ENCODE measurements at regions of chr11 and their contacts with region 1.

Region 1: GRCh38 chr11:122743949-122744348 is 88.4 kb downstream of the UBASH3B start:
- DNase-seq: peak; percentile 91
- H3K4me3 Mint-ChIP-seq: no peak overlapping the region
- H3K27ac Mint-ChIP-seq: no peak overlapping the region
- H3K4me1 Mint-ChIP-seq: peaks cover 5% of the 10 kb centered on the region
- H3K27me3 Mint-ChIP-seq: peaks cover 6% of the 10 kb centered on the region

Region 2: DNA sequence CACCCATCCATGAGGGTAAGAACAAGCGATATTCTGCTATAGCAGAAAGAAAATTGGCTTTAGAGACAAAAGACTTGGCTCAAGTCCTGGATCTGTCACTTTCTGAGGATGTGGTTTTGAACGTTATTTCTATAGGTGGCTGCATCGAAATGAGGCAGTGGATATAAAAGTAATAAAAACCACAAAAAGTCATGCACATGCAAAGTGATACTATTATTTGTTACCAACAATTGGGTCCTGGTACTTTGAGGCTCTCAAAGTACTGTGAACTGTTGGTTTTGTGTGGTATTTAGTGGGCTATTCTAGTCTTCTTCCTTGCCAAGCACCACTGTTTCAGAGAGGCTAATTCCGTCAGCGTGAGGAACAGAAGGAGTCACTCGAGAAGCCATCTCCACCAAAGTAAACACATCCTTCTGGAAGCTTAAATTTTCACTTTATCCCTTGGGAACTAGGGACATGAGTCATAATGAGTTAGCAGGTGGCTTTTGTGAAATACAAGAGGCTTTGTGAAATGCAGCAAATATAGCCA is 75.3 kb before region 1 on chr11:
- CTCF ChIA-PET with region 1: interaction called, 6 read pairs
- intact Hi-C with region 1: loop called (anchors 1 kb)
- DNase-seq: peak; percentile 27
- H3K4me3 Mint-ChIP-seq: no peak overlapping the region
- H3K27ac Mint-ChIP-seq: no peak overlapping the region
- H3K4me1 Mint-ChIP-seq: peaks cover 59% of the 10 kb centered on the region
- H3K27me3 Mint-ChIP-seq: no peaks in the 10 kb centered on the region

Region 3: DNA sequence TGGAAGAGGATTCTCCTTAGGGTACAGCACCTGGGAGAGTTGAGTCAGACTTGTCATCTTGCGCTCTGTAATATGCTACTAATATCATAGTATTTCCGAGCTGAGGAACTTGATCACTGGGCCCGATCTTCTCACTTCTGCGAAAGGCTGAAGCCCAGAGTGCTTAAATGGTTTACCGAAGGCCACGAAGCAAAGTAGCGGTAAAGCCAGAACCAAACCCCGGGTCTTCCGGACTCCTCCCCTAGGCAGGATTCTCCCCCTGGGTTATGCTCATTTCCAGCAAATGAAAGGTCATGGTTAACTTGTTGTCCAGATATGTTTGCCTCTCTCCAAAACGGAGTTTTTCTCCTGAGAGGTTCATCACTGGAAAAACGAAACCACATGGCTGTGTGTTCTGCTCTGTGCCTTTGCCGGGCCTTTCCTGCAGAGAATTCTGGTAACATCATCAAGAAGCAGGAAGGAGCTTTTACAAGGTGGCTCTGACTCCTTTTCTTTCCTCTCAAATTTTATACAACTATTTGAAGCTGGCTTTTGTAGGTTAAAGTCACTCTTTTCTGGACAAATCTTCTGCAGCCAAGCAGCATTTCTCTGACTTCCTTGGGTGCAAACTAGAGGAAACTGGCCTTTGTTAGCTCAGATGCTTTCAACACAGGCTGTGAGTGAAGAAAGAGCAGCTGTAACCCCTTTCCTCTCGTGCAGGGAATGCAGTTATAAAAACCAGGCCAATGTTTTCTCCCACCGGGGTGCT is 53.0 kb before region 1 on chr11:
- CTCF ChIA-PET with region 1: interaction called, 9 read pairs
- intact Hi-C with region 1: loop called (anchors 1 kb)
- DNase-seq: peak; percentile 32
- H3K4me3 Mint-ChIP-seq: peak overlapping the region; percentile 47
- H3K27ac Mint-ChIP-seq: peak overlapping the region; percentile 82
- H3K4me1 Mint-ChIP-seq: peaks cover 72% of the 10 kb centered on the region
- H3K27me3 Mint-ChIP-seq: no peaks in the 10 kb centered on the region

Region 4: GRCh38 chr11:122697636-122698167 is 46.2 kb before region 1 on chr11:
- CTCF ChIA-PET with region 1: interaction called, 9 read pairs
- intact Hi-C with region 1: loop called (anchors 1 kb)
- DNase-seq: peak; percentile 77
- H3K4me3 Mint-ChIP-seq: peak overlapping the region; percentile 50
- H3K27ac Mint-ChIP-seq: peak overlapping the region; percentile 78
- H3K4me1 Mint-ChIP-seq: peaks cover 77% of the 10 kb centered on the region
- H3K27me3 Mint-ChIP-seq: no peaks in the 10 kb centered on the region

Region 5: DNA sequence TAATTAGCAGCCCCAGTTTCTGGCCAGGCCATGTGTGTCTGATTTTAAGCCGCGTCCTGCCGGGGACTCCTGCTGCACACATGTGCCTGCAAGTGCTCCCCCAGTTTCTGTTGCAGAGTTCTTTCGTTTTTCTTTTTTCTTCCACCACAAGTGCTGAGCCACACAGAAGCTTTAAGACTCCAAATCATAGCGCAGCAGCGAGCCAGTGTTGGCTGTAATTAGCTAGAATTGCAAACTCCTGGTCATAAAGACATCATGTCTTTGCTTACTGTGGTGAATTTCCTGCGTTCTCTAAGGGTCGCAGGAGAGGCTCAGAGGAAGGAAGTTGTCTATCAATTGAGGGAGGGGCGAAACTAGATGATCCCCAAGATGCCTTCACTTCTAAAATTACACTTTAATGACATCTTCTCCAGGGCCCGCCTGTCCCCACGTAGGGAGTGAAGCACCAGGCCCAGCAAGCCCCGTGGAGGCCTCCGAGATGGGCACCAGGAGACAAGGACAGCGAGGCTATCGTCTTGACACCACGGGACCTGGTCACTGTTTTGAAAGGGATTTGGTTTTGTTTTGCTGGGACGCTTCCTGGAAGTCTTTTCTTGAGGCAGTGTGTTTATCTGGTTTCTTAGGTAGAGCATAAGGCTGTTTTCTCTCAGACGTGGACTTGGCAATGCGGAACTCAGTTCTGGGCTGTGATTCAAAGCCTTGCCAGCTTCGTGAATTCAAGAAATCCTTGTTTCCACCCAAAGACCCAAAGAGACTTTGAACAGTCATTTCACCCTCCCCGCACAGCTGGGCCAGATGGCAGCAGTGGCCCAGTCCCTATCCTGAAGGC is 16.6 kb before region 1 on chr11:
- CTCF ChIA-PET with region 1: interaction called, 6 read pairs
- intact Hi-C with region 1: loop called (anchors 1 kb)
- DNase-seq: peak; percentile 57
- H3K4me3 Mint-ChIP-seq: peak overlapping the region; percentile 66
- H3K27ac Mint-ChIP-seq: peak overlapping the region; percentile 63
- H3K4me1 Mint-ChIP-seq: peaks cover 62% of the 10 kb centered on the region
- H3K27me3 Mint-ChIP-seq: no peaks in the 10 kb centered on the region

Region 6: DNA sequence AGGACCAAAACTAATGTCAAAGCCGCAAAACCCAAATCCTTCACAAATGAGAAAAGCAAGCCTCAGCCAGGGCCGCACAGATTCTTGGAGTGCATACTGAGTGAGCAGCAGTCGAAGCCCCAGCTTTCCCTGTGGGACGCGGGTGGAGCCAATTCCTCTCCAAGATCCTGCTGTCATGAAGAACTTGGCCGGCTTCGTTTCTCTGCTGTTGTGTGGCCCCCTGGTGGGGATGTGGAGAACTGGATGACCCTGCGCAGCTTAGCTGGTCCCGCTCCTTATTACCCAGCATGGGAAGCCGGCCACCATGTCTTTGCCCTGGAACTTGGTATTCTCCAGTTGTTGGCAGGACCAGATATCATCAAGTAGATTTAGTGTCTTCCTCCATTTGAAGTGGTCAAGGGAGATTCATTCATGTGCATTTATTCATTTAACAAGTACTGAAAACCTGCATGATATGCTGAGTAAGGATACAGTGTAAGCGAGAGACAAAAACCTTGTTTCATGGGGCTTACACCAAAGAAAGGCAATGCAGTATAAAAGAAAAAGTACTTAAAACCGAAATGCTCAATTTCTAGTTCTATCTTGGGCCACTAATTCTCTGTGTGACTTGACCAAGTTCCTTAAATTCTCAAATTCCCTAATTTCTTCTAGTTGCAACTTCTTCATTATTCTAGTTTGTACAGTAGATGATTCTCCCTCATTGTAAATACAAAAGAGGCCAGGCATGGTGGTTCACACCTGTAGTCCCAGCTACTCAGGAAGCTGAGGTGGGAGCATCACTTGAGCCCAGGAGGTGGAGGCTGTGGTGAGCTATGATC is 37.6 kb after region 1 on chr11:
- CTCF ChIA-PET with region 1: interaction called, 22 read pairs
- intact Hi-C with region 1: loop called (anchors 1 kb)
- DNase-seq: peak; percentile 87
- H3K4me3 Mint-ChIP-seq: no peak overlapping the region
- H3K27ac Mint-ChIP-seq: no peak overlapping the region
- H3K4me1 Mint-ChIP-seq: peaks cover 22% of the 10 kb centered on the region
- H3K27me3 Mint-ChIP-seq: no peaks in the 10 kb centered on the region

Measured in activated naive CD4-positive, alpha-beta T cell treated with anti-CD3 and anti-CD28 coated beads for 36 hours (primary cell).